GM12878 (cell line): ENCODE measurements at regions of chr2 and their contacts with region 1.

Region 1: GRCh38 chr2:165675551-165675968 is 118.5 kb downstream of the GALNT3 start:
- DNase-seq: no peak
- ATAC-seq: peak; percentile 84
- H3K4me3 ChIP-seq: no peak overlapping the region
- H3K27ac ChIP-seq: no peak overlapping the region
- H3K4me1 ChIP-seq: no peaks in the 10 kb centered on the region
- H3K27me3 ChIP-seq: no peaks in the 10 kb centered on the region
- CTCF ChIP-seq: no peak
- EP300 ChIP-seq: no peak
- POLR2A ChIP-seq: no peak
- RAD21 ChIP-seq: no peak

Region 2: DNA sequence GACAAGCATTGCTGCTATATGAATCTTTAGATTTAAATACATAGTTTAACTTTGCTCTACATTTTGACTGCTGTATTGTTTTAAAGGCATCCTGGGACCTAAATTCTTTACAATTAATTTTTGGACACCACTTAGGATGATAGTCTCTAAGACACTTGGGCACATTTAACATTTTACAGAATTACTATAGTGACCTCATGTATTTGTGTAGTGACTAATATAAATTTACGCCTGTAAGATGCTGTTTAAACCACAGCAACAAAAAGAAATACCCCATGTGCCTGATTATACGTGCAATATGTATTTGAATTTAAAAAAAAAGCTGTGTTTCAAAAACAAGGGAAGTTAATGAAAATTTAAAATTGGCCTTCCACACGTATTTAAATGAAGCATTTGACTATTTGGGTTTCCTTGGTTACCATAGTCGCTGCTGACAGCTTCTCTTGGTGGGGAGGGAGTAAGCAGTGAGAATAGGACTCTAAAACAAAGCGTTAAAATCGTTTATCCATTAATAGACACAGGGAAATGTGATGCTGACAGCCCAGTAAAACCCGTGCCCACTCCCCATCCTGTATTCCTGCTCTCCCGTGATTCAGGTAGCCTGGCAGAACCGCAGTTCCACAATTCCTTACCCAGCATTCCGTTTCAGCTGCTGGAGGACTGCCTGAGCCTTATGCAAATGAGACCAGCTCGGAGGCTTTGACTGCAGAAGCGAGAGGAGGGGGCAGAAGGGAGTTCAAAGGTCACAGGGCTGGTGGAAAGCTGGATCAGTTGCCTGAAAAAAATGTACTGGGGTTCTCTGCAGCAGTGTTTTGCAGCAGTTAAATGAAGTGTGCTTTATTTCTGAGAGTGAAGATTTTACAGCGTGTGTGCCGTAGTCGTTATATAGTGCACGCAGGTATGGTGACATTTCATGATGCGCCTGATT is 101.8 kb before region 1 on chr2:
- CTCF ChIA-PET with region 1: interaction called, 3 read pairs
- POLR2A ChIA-PET with region 1: interaction called, 4 read pairs
- RAD21 ChIA-PET with region 1: interaction called, 4 read pairs
- SMC1A ChIA-PET with region 1: interaction called, 26 read pairs
- in situ Hi-C with region 1: no loop called
- intact Hi-C with region 1: no loop called
- DNase-seq: no peak
- ATAC-seq: peak; percentile 66
- H3K4me3 ChIP-seq: no peak overlapping the region
- H3K27ac ChIP-seq: no peak overlapping the region
- H3K4me1 ChIP-seq: no peaks in the 10 kb centered on the region
- H3K27me3 ChIP-seq: no peaks in the 10 kb centered on the region
- CTCF ChIP-seq: no peak
- EP300 ChIP-seq: no peak
- POLR2A ChIP-seq: no peak
- RAD21 ChIP-seq: no peak

Region 3: DNA sequence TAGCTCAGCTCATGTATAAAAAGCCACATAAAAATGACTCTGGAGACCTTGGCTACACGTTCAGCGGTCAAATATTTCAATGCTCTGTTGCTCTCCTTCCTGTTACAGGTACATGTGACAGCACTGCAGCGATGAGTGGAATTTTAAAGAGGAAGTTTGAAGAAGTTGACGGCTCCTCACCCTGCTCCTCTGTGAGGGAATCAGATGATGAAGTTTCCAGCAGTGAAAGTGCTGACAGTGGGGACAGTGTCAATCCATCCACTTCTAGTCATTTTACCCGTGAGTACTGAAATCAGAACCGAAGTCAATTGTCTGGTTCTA is 80.7 kb before region 1 on chr2:
- CTCF ChIA-PET with region 1: interaction called, 3 read pairs
- POLR2A ChIA-PET with region 1: interaction called, 8 read pairs
- RAD21 ChIA-PET with region 1: interaction called, 6 read pairs
- SMC1A ChIA-PET with region 1: interaction called, 13 read pairs
- in situ Hi-C with region 1: no loop called
- intact Hi-C with region 1: loop called (anchors 1 kb)
- DNase-seq: peak; percentile 77
- ATAC-seq: peak; percentile 84
- H3K4me3 ChIP-seq: no peak overlapping the region
- H3K27ac ChIP-seq: no peak overlapping the region
- H3K4me1 ChIP-seq: no peaks in the 10 kb centered on the region
- H3K27me3 ChIP-seq: no peaks in the 10 kb centered on the region
- CTCF ChIP-seq: no peak
- EP300 ChIP-seq: no peak; a peak in 1 of 4 replicates
- POLR2A ChIP-seq: no peak
- RAD21 ChIP-seq: no peak

Region 4: DNA sequence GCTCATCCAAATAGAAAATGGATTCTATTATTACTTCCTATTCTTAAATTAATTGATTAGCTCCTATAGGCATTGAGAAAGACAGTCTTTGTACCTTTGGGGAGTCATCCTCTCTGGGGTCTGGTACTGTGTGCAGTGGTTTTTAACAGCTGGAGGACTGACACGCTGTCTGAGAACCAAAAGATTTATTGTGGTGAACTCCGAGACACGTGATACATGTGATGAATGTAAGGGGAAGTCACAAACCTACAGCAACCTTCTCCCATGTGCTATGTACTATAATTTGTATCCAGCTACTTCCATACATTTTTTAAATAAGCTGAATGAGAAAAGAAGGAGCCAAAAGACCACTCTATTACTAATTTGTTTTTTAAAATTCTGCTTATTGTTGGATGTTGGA is 15.2 kb before region 1 on chr2:
- CTCF ChIA-PET with region 1: interaction called, 14 read pairs
- POLR2A ChIA-PET with region 1: interaction called, 19 read pairs
- RAD21 ChIA-PET with region 1: interaction called, 11 read pairs
- SMC1A ChIA-PET with region 1: interaction called, 98 read pairs
- in situ Hi-C with region 1: no loop called
- intact Hi-C with region 1: no loop called
- DNase-seq: no peak
- ATAC-seq: peak; percentile 88
- H3K4me3 ChIP-seq: no peak overlapping the region
- H3K27ac ChIP-seq: no peak overlapping the region
- H3K4me1 ChIP-seq: no peaks in the 10 kb centered on the region
- H3K27me3 ChIP-seq: no peaks in the 10 kb centered on the region
- CTCF ChIP-seq: no peak
- EP300 ChIP-seq: no peak
- POLR2A ChIP-seq: no peak
- RAD21 ChIP-seq: no peak